ENCODE measurements at regions of chr19 and their contacts with region 1.

Region 1: GRCh38 chr19:53431399-53432087 is at the start of gene ZNF761:
- DNase-seq: peak; percentile 92 to 97
- ATAC-seq: peak; percentile 100
- H3K4me3 ChIP-seq: peak within 1 kb of the TSS; percentile 58 to 97 (median 77)
- H3K27ac ChIP-seq: peak within 1 kb of the TSS in 9 of 10 donors; percentile 60 to 87 (median 74)
- H3K4me1 ChIP-seq: peaks cover 0 to 18% (median 7%) of the 10 kb centered on the region in 9 donors
- H3K27me3 ChIP-seq: no peaks in the 10 kb centered on the region
- CTCF ChIP-seq: peak in 8 of 9 donors; percentile 40 to 68 (median 60)
- total RNA-seq, gene ZNF761: 2.4 to 4.2 (median 3.4) TPM

Region 2: GRCh38 chr19:52464798-52465470 is 966.6 kb before region 1 on chr19:
- intact Hi-C with region 1: no loop called
- DNase-seq: no peak
- ATAC-seq: no peak
- H3K4me3 ChIP-seq: no peak overlapping the region
- H3K27ac ChIP-seq: no peak overlapping the region
- H3K4me1 ChIP-seq: no peaks in the 10 kb centered on the region
- H3K27me3 ChIP-seq: no peaks in the 10 kb centered on the region
- CTCF ChIP-seq: no peak

Region 3: GRCh38 chr19:53467485-53468262 is 36.1 kb after region 1 on chr19 and contains the start of gene ZNF813:
- intact Hi-C with region 1: loop called in 4 of 10 experiments (anchors 5 kb)
- DNase-seq: peak; percentile 95 to 98
- ATAC-seq: peak; percentile 98 to 100 (median 99)
- H3K4me3 ChIP-seq: peak within 1 kb of the TSS; percentile 52 to 98 (median 77)
- H3K27ac ChIP-seq: peak within 1 kb of the TSS in 9 of 10 donors; percentile 61 to 85 (median 77)
- H3K4me1 ChIP-seq: peaks cover 2 to 22% (median 13%) of the 10 kb centered on the region in 9 donors
- H3K27me3 ChIP-seq: peaks cover 0 to 12% (median 6%) of the 10 kb centered on the region in 7 donors
- CTCF ChIP-seq: no peak
- total RNA-seq, gene ZNF813: 0.68 to 1.8 (median 1.4) TPM

Region 4: GRCh38 chr19:53520550-53521372 is 89.2 kb after region 1 on chr19:
- intact Hi-C with region 1: loop called in 4 of 10 experiments (anchors 5 to 10 kb)
- DNase-seq: peak; percentile 95 to 98
- ATAC-seq: peak; percentile 96 to 100 (median 99)
- H3K4me3 ChIP-seq: peak overlapping the region; percentile 14 to 73 (median 52)
- H3K27ac ChIP-seq: peak overlapping the region; percentile 74 to 88 (median 82)
- H3K4me1 ChIP-seq: peaks cover 0 to 25% (median 14%) of the 10 kb centered on the region in 9 donors
- H3K27me3 ChIP-seq: no peaks in the 10 kb centered on the region
- CTCF ChIP-seq: no peak

Region 5: DNA sequence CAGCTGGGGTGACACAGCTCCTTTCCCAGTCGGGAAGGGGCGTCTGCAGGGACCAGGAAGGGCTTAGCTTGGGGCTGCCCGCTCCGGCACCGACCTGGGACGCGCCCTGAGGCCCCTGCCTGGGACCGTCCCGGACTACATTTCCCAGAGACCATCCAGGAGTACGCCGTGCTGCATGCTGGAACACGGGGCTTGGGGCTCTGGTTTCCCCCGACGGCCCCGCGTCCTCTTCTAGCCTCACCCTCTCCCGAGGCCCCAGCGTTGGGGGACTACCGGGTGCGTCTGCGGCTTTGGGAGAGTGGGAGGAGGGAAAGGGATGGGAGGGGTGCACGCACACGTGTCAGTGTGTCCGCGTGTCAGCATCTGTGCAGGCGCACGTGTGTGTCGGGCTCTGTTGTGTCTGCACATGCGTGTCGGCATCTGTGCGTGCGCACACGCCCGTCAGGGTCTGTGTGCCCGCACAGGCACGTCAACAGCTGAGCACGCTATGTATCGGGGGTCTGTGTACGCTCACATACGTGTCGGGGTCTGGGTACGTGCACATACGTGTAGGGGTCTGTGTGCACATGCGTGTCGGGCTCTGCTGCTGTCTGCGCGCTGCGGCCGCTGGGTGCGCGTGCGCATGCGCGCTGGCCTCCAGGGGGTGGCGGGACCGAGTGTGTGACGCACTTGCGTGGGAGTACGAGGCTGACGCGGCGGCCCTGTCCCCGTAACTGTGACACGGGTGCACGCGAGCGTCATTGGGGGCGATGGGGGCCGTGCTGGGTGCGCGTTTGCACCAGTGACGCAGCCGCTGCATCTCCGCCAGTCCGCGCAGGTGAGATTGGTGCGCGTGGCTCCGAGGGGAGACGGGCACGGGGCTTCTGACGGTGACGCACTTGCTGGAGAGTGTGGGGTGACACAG is 106.2 kb after region 1 on chr19 and contains the start of gene ZNF331:
- intact Hi-C with region 1: no loop called
- DNase-seq: peak; percentile 83 to 84
- ATAC-seq: peak; percentile 87 to 96 (median 94)
- H3K4me3 ChIP-seq: peak within 1 kb of the TSS; percentile 33 to 80 (median 72)
- H3K27ac ChIP-seq: peak within 1 kb of the TSS; percentile 62 to 90 (median 86)
- H3K4me1 ChIP-seq: peaks cover 0 to 14% (median 0%) of the 10 kb centered on the region in 9 donors
- H3K27me3 ChIP-seq: no peaks in the 10 kb centered on the region
- CTCF ChIP-seq: peak in 7 of 9 donors; percentile 10 to 60 (median 54)
- total RNA-seq, gene ZNF331: 10.4 to 21.9 (median 14.4) TPM

Measured in heart right ventricle (tissue), 16 donors.